Activated T-helper 1 cell treated with anti-CD3 and anti-CD28 coated beads, Interleukin-12 subunit alpha, Interleukin-12 subunit beta, Interleukin-2, Interleukin-4 antibody, amounts not matched to agents 30 ng/mL and 10 ng/mL and 1 ng/mL, durations not matched to agents 14 hours and 24 hours and 36 hours (primary cell): ENCODE measurements at regions of chr5 and their contacts with region 1.

Region 1: GRCh38 chr5:67003935-67004729 is 192.5 kb downstream of the CD180 start:
- DNase-seq: peak; percentile 81
- H3K4me3 Mint-ChIP-seq: peak overlapping the region; percentile 90
- H3K27ac Mint-ChIP-seq: peak overlapping the region; percentile 92
- H3K4me1 Mint-ChIP-seq: peaks cover 64% of the 10 kb centered on the region
- H3K27me3 Mint-ChIP-seq: no peaks in the 10 kb centered on the region

Region 2: GRCh38 chr5:66828548-66829357 is 175.4 kb before region 1 on chr5:
- intact Hi-C with region 1: loop called (anchors 2 kb)
- DNase-seq: peak; percentile 75
- H3K4me3 Mint-ChIP-seq: peak overlapping the region; percentile 94
- H3K27ac Mint-ChIP-seq: peak overlapping the region; percentile 96
- H3K4me1 Mint-ChIP-seq: peaks cover 90% of the 10 kb centered on the region
- H3K27me3 Mint-ChIP-seq: no peaks in the 10 kb centered on the region

Region 3: GRCh38 chr5:67021521-67021920 is 17.4 kb after region 1 on chr5:
- intact Hi-C with region 1: loop called (anchors 1 kb)
- DNase-seq: no peak
- H3K4me3 Mint-ChIP-seq: no peak overlapping the region
- H3K27ac Mint-ChIP-seq: peak overlapping the region; percentile 12
- H3K4me1 Mint-ChIP-seq: peaks cover 32% of the 10 kb centered on the region
- H3K27me3 Mint-ChIP-seq: no peaks in the 10 kb centered on the region

Region 4: DNA sequence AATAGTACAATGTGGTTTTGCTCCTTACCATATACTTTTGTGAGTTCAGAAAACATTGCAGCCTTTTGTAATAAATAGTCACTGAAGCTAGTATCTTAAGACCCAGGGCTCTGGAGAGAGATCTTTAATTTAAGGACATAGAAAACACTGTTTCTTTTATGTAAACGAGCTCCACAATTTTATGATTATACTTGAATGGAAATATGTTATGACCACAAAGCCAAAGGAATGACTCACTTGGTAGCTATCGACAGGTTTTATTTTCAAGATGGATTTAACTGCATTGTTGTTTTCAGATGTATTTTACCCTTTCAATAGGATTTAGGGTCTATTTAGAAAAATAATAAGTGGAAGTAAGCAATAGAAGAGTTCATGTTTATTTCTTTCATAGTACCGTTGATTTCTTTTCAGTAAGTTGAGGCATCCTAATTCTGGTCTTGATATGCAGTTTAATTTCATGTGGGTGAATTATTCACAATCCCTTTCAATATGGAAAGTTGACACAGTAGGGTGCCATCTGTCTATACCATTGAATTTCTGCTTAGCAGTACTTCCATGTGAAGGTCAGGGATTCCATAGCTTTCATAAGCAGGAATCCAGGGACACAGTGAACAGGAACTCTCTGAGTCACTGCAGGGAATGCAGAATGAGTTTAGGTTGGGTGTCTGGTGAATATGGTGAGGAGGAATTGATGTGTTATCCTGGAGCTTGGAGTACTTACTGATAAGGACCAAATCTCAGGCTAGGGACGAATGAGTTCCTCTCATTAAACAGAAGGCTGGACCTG is 34.9 kb after region 1 on chr5:
- intact Hi-C with region 1: loop called (anchors 1 kb)
- DNase-seq: no peak
- H3K4me3 Mint-ChIP-seq: no peak overlapping the region
- H3K27ac Mint-ChIP-seq: peak overlapping the region; percentile 64
- H3K4me1 Mint-ChIP-seq: peaks cover 42% of the 10 kb centered on the region
- H3K27me3 Mint-ChIP-seq: no peaks in the 10 kb centered on the region

Region 5: DNA sequence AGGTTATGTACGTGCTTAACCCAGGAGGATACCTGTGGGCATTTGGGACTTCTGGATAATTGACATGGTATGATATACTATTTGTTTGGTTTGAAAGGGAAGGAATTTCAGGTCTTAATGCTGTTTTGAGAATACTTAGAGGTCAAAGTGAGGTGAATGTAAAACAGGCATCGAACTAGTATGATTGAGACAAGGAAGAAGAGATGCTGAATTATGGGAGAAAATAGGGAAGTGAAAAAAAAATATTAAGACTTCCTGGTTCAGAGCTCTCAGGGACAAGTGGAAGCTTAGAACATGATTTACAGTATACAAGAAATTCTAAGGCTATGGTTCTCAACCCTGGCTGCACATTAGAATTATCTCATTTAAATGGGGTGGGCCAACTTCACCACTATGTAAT is 77.1 kb after region 1 on chr5:
- intact Hi-C with region 1: loop called (anchors 2 kb)
- DNase-seq: no peak
- H3K4me3 Mint-ChIP-seq: no peak overlapping the region
- H3K27ac Mint-ChIP-seq: no peak overlapping the region
- H3K4me1 Mint-ChIP-seq: peaks cover 5% of the 10 kb centered on the region
- H3K27me3 Mint-ChIP-seq: no peaks in the 10 kb centered on the region

Region 6: DNA sequence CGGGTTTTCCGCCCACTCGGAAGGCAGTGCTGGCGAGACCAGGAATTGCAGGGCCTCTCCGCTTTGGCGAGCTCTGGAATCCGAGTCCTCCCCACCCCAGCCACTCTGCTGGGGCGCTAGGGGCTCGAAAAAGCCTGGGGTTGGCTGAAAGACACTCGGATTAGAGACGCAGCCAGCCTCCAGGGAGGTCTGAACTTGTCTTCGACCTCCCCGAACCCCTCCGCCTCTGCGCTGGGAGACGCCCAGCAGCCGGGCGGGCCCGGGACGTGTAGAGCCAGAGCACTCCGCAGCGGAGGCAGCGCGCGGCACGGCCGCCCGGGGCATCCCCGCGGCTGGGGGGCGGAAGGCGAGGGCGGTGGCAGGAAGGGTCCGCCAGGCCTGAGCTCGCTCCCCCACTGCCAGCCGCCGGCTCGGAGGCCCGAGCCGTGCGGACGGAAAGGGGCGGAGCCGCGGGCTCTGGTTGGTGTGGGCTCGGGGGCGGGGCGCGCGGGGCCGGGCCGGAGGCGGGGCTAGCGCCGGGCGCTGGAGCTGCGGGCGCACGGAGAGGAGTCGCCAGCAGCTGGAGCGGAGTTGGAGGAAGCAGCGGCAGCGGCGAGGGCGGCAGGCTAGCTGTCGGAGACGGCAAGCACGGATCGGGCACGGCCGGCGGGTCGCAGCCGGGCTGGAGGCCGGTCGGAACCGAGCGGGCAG is 1211.2 kb after region 1 on chr5 and contains the start of gene PIK3R1:
- intact Hi-C with region 1: loop called (anchors 1 kb)
- DNase-seq: peak; percentile 88
- H3K4me3 Mint-ChIP-seq: peak within 1 kb of the TSS; percentile 91
- H3K27ac Mint-ChIP-seq: peak within 1 kb of the TSS; percentile 93
- H3K4me1 Mint-ChIP-seq: peaks cover 37% of the 10 kb centered on the region
- H3K27me3 Mint-ChIP-seq: no peaks in the 10 kb centered on the region
- total RNA-seq, gene PIK3R1: 43.3 and 46.2 TPM in 2 replicates